GM10248 (cell line): ENCODE measurements at regions of chr16 and their contacts with region 1.

Region 1: GRCh38 chr16:68310761-68311511 is at the starts of genes PRMT7 and SLC7A6OS:
- DNase-seq: peak; percentile 98
- CTCF ChIP-seq: no peak

Region 2: GRCh38 chr16:68128577-68129305 is 182.2 kb before region 1 on chr16:
- CTCF ChIA-PET with region 1: no interaction called
- POLR2A ChIA-PET with region 1: no interaction called
- DNase-seq: no peak
- CTCF ChIP-seq: no peak

Region 3: DNA sequence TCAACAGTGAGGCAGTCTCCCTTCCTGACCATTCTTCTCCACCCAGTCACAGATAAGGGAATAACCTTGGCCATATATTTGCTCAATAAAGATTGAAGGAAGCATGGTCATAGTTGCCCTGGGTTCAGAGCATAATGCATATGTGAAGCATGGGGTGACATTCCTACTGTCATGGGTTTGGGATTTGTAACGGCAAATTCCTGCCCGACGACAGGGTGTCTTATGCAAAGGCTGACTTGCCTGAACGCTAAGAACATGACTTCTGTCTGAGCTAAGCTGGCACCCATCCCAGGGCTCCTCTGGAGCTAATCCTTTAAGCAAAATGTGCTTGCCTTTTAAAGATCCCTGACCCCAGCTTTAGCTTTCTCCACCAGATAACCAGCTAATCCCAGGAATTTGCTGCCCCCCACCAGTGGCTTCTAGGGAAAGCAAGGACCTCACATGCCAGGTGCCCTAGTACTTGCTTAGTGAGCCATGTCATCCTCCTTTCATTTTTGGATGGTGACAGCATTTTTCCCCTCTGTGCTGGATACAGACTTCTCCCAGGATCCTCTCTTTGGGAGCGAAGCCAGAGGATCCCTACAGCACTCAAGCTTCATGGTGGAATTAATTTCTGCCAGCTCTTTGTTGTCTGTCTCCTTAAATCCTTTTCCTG is 11.9 kb before region 1 on chr16:
- CTCF ChIA-PET with region 1: interaction called, 11 read pairs
- POLR2A ChIA-PET with region 1: interaction called, 3 read pairs
- DNase-seq: no peak
- CTCF ChIP-seq: no peak

Region 4: DNA sequence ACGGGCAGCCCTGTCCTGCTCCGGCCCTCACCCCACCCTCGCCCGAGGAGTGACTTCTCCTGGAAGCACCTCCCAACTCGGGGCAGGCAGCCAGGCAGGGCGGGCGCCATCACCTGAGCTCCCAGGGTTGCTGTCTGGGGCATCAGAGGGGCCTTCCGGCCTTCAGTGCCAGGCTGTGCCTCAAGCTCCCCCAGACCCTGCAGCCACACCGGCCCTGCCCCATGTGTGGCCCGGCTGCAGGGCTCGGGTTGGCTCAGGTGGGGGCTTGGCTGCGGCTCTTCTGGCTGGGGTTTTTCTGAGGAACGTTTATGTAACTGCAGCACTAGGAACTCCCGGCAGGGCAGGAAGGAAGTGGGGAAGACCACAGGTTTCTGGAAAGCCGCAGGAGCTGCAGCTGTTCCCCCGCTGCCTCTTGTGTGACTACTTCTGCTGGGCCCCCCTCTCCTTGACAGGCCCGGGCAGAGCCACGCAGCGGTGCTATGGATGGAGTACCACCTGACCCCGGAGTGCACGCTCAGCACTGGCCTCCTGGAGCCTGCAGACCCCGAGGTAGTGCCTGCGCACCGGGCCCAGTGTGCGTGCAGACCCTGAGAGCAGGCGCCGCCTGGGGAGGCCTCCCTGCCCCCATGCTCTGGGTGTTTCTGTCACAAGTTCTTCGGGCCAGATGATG is 45.4 kb after region 1 on chr16:
- CTCF ChIA-PET with region 1: no interaction called
- POLR2A ChIA-PET with region 1: no interaction called
- DNase-seq: peak; percentile 87
- CTCF ChIP-seq: no peak

Region 5: DNA sequence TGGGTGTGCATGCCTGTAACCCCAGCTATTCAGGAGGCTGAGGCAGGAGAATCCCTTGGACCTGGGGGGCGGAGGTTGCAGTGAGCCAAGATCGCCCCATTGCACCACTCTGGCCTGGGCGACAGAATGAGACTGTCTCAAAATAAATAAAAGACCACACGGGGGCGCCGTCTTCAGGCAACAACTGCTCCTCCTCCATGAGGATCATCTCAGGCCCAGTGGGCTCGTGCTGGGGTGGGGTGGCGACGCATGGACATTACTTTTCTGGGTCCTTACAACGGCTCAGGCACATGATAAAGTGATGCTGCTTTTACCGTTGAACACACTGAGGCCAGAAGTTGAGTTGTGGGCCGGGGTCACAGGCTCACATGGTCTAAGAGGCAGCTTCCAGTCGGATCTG is 56.1 kb after region 1 on chr16:
- CTCF ChIA-PET with region 1: no interaction called
- POLR2A ChIA-PET with region 1: no interaction called
- DNase-seq: peak; percentile 62
- CTCF ChIP-seq: peak; percentile 49